ENCODE measurements at regions of chr1 and their contacts with region 1.

Region 1: GRCh38 chr1:161045750-161046571 is at the start of gene USF1:
- DNase-seq: peak; percentile 88 to 99 (median 91)

Region 2: GRCh38 chr1:161117759-161118581 is 72.0 kb after region 1 on chr1 and contains the starts of genes NIT1 and PFDN2:
- intact Hi-C with region 1: loop called (anchors 5 kb)
- DNase-seq: peak; percentile 79 to 98 (median 88)